ENCODE measurements at regions of chrX and their contacts with region 1.

Region 1: GRCh38 chrX:41137589-41137988 is 52.3 kb downstream of the USP9X start:
- DNase-seq: no peak
- ATAC-seq: peak; percentile 49
- H3K4me3 ChIP-seq: no peak overlapping the region
- H3K27ac ChIP-seq: no peak overlapping the region
- H3K4me1 ChIP-seq: no peaks in the 10 kb centered on the region
- H3K27me3 ChIP-seq: no peaks in the 10 kb centered on the region
- CTCF ChIP-seq: peak in 2 of 3 experiments; percentile 30 to 42; a peak in 4 of 6 replicates
- EP300 ChIP-seq: no peak
- POLR2A ChIP-seq: no peak
- RAD21 ChIP-seq: peak; percentile 32; the same call in 1 of the 2 replicates

Region 2: DNA sequence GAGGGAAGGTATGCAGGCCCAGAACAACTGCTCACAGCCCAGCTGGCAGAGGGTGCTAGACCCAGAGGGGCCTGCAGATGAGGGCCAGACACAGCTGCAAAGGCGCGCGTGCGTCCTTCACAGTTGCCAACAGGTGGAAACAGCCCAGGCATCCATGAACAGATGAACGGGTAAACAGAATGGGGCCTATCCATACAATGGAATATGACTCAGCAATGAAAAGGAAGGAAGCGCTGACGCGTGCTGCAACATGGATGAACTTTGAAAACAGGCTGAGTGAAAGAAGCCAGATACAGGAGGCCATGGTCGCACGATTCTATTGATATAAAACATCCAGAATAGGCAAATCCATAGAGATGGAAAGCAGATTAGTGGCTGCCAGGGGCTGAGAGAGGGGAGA is 113.3 kb after region 1 on chrX:
- CTCF ChIA-PET with region 1: interaction called, 31 read pairs
- POLR2A ChIA-PET with region 1: interaction called, 3 read pairs
- RAD21 ChIA-PET with region 1: interaction called, 4 read pairs
- SMC1A ChIA-PET with region 1: interaction called, 12 read pairs
- in situ Hi-C with region 1: no loop called
- intact Hi-C with region 1: loop called (anchors 5 kb)
- DNase-seq: no peak
- ATAC-seq: no peak
- H3K4me3 ChIP-seq: no peak overlapping the region
- H3K27ac ChIP-seq: no peak overlapping the region
- H3K4me1 ChIP-seq: no peaks in the 10 kb centered on the region
- H3K27me3 ChIP-seq: no peaks in the 10 kb centered on the region
- CTCF ChIP-seq: no peak
- EP300 ChIP-seq: no peak
- POLR2A ChIP-seq: no peak
- RAD21 ChIP-seq: no peak

Region 3: GRCh38 chrX:41259516-41259915 is 121.9 kb after region 1 on chrX:
- CTCF ChIA-PET with region 1: interaction called, 31 read pairs
- POLR2A ChIA-PET with region 1: no interaction called
- RAD21 ChIA-PET with region 1: no interaction called
- SMC1A ChIA-PET with region 1: interaction called, 6 read pairs
- in situ Hi-C with region 1: no loop called
- intact Hi-C with region 1: loop called (anchors 5 kb)
- DNase-seq: no peak
- ATAC-seq: no peak
- H3K4me3 ChIP-seq: no peak overlapping the region
- H3K27ac ChIP-seq: no peak overlapping the region
- H3K4me1 ChIP-seq: peaks cover 6% of the 10 kb centered on the region; the same call in 1 of the 2 replicates
- H3K27me3 ChIP-seq: no peaks in the 10 kb centered on the region
- CTCF ChIP-seq: no peak
- EP300 ChIP-seq: no peak
- POLR2A ChIP-seq: no peak
- RAD21 ChIP-seq: no peak

Measured in GM12878 (cell line).